PC-9 (cell line): ENCODE measurements at regions of chr13 and their contacts with region 1.

Region 1: GRCh38 chr13:113123226-113124201 is 915 bp downstream of the F10 start:
- DNase-seq: no peak
- H3K4me3 ChIP-seq: no peak overlapping the region
- H3K27ac ChIP-seq: no peak overlapping the region
- H3K4me1 ChIP-seq: no peaks in the 10 kb centered on the region
- H3K27me3 ChIP-seq: peaks cover 89% of the 10 kb centered on the region
- CTCF ChIP-seq: peak; percentile 30; the same call in 1 of the 2 replicates

Region 2: DNA sequence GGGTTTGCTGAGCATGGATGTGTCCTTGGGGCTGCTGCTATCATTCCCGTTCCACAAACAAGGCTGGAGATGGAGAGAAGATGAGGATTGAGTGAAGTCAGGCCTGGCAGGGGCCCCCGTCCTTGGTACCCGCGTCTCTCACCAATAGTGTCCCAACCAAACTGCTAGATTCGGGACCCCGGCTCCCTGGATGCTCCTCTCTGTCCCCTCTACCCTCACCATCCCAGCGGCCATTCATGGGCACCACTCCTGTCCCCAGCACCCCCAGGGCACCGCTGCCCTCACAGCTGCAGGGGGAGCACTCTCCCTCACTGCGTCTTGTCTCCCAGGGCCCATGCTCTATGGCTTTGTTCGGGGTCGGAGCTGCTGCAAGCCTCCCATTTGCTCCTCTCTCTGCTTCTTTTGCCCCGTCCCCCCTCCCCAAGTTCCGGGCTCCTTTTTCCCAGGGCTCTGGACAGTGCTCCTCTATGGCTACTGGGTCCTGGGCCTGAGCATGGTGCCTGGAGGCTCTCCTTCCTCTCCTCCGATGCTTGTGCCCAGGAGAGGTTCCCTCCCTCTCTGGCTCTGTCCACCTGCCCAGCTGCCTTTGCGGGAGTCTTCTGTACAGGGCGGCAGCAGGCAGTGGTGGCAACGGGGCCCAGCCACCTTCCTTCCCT is 1583.6 kb before region 1 on chr13:
- CTCF ChIA-PET with region 1: no interaction called
- POLR2A ChIA-PET with region 1: no interaction called
- intact Hi-C with region 1: no loop called
- DNase-seq: no peak
- H3K4me3 ChIP-seq: no peak overlapping the region
- H3K27ac ChIP-seq: no peak overlapping the region
- H3K4me1 ChIP-seq: no peaks in the 10 kb centered on the region
- H3K27me3 ChIP-seq: peaks cover 100% of the 10 kb centered on the region
- CTCF ChIP-seq: no peak

Region 3: GRCh38 chr13:112333756-112334543 is 789.6 kb before region 1 on chr13:
- CTCF ChIA-PET with region 1: no interaction called
- POLR2A ChIA-PET with region 1: no interaction called
- intact Hi-C with region 1: no loop called
- DNase-seq: peak in 1 of 2 experiments; percentile 4
- H3K4me3 ChIP-seq: no peak overlapping the region
- H3K27ac ChIP-seq: no peak overlapping the region
- H3K4me1 ChIP-seq: no peaks in the 10 kb centered on the region
- H3K27me3 ChIP-seq: peaks cover 86% of the 10 kb centered on the region
- CTCF ChIP-seq: no peak

Region 4: DNA sequence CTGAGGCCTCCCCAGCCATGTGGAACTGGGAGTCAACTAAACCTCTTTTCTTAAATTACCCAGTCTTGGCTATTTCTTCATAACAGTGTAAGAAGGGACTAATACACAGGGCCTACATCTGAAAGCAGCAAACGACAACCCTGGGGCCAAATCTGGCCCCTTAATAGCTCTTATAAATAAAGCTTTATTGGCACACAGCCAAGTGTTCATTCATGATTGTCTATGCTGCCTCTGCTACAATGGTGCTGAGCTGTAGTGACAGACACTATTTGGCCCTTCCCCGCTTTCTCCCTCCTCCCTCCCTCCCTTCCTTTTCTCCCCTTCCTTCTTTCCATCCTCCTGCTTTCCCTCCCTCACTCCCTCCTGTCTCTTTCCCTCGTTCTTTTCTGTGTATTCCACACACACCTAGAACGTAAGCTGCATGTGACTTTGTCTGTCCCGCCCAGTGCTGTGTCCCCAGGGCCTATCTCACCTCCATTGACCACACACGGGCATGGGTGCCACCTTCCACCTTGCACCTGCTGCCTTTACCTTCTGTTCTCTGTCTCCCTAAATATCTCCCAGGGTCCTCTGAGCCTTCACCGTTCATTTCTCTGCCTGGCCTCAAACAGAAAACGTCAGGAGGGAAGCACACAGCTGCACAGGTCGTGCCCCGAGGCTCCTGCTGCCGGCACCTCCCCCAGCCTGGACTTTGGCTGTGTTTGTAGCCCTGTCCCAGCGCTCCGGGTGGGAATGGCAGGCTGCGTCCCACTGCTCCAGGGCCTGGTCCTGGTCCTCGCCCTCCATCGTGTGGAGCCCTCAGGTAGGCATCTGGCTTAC is 34.6 kb after region 1 on chr13 and contains the start of gene PROZ:
- CTCF ChIA-PET with region 1: interaction called, 27 read pairs
- POLR2A ChIA-PET with region 1: no interaction called
- intact Hi-C with region 1: no loop called
- DNase-seq: no peak
- H3K4me3 ChIP-seq: no peak within 1 kb of the TSS
- H3K27ac ChIP-seq: no peak within 1 kb of the TSS
- H3K4me1 ChIP-seq: peaks cover 5% of the 10 kb centered on the region; the same call in 1 of the 2 replicates
- H3K27me3 ChIP-seq: peaks cover 19% of the 10 kb centered on the region
- CTCF ChIP-seq: no peak
- total RNA-seq, gene PROZ: not detected in 2 replicates